H1 (cell line): ENCODE measurements at regions of chr2 and their contacts with region 1.

Region 1: DNA sequence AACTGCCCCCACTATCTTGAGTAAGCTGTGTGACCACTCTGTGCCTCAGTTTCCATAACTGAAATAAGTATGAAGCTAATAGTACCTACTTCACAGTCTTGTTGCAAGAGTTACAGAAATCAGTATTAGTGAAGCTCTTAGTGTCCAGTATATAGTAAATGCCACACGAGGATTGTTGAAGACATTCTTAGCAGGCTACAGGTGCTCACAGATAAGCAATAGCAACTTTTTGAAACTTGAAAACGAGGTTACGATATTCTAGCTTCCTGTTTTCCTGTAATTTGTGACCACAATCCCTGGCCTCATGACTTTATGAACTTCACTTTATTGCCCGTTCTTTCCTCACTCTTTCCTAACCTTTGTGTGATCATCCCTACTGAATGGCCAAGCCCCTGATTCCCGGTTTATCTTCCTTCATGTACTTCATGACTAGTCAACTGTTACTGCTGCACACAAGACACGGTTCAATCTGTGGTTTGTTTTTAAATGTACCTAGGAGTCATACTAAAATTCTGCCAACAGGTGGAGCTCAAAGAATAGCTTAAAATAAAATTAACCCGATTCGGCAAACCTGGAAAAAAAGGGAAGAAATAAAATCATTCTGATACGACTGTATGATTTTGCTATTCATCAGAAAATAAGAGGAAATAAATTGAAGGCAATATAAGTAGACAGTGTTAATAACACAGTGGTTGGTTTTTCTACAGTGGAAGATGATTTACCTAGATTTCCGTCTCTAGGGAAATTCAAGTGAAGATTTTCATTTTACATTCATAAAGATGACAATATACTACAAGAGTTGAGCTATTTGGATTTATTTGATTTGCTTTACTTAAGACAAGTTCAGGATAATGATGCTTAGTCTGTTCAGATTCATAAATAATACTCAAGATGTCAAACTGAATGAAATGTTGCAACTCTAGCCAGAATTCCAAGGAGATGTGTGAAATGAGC is 38.1 kb upstream of the STAT1 start:
- DNase-seq: no peak
- H3K4me3 ChIP-seq: no peak overlapping the region
- H3K27ac ChIP-seq: no peak overlapping the region
- H3K4me1 ChIP-seq: no peaks in the 10 kb centered on the region
- H3K27me3 ChIP-seq: no peaks in the 10 kb centered on the region
- CTCF ChIP-seq: peak in 2 of 3 experiments; percentile 45 to 52; a peak in 2 of 4 replicates
- EP300 ChIP-seq: no peak
- POLR2A ChIP-seq: no peak
- RAD21 ChIP-seq: peak; percentile 71 to 77

Region 2: GRCh38 chr2:190891372-190891771 is 160.7 kb before region 1 on chr2:
- CTCF ChIA-PET with region 1: no interaction called
- POLR2A ChIA-PET with region 1: no interaction called
- DNase-seq: no peak
- H3K4me3 ChIP-seq: no peak overlapping the region
- H3K27ac ChIP-seq: no peak overlapping the region
- H3K4me1 ChIP-seq: peaks cover 0 to 6% (median 2%) of the 10 kb centered on the region in 4 experiments; a peak in 1 of 7 replicates
- H3K27me3 ChIP-seq: no peaks in the 10 kb centered on the region
- CTCF ChIP-seq: no peak
- EP300 ChIP-seq: no peak
- POLR2A ChIP-seq: no peak
- RAD21 ChIP-seq: no peak

Region 3: DNA sequence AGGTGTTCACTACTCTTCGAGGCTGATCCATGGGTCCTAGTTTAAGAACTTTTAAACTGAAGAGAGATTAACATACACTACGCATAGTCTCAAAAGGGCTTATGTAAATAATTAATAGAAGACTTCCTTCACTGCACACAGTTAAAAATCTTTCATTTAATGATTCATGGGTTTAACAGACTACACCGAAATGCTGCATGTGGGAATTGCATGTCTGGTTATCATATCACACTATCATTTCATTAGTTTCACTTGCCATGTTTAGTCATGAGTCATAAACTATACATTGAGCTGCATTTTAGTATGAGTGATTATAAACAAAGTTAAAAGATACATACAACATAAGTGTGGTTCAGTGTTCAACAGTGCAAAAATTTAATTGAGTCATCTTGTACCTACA is 140.3 kb before region 1 on chr2:
- CTCF ChIA-PET with region 1: no interaction called
- POLR2A ChIA-PET with region 1: no interaction called
- DNase-seq: no peak
- H3K4me3 ChIP-seq: no peak overlapping the region
- H3K27ac ChIP-seq: no peak overlapping the region
- H3K4me1 ChIP-seq: no peaks in the 10 kb centered on the region
- H3K27me3 ChIP-seq: no peaks in the 10 kb centered on the region
- CTCF ChIP-seq: no peak
- EP300 ChIP-seq: no peak
- POLR2A ChIP-seq: no peak
- RAD21 ChIP-seq: no peak

Region 4: GRCh38 chr2:191064590-191064989 is 12.5 kb after region 1 on chr2:
- CTCF ChIA-PET with region 1: interaction called, 69 read pairs
- POLR2A ChIA-PET with region 1: no interaction called
- DNase-seq: no peak
- H3K4me3 ChIP-seq: no peak overlapping the region
- H3K27ac ChIP-seq: no peak overlapping the region
- H3K4me1 ChIP-seq: no peaks in the 10 kb centered on the region; a peak in 1 of 7 replicates
- H3K27me3 ChIP-seq: no peaks in the 10 kb centered on the region
- CTCF ChIP-seq: no peak
- EP300 ChIP-seq: no peak
- POLR2A ChIP-seq: no peak
- RAD21 ChIP-seq: no peak

Region 5: DNA sequence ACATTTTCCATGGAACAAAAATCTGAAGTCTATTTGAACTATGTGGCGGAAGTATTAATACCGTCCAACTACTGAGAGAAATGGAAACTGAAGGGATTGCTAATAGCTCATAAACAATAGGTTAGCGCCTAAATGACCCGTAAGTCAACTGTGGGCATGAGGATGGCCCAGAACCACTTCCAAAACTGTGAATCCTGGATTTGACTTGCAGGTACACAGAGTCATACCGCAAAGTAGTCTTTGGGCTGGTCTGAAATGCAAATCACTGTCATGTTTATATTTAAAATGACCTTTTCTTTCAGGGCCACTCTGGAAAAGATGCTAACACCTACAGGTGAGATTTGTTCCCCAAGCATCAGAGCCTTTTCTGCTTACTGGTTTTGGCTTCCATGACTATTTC is 48.1 kb after region 1 on chr2:
- CTCF ChIA-PET with region 1: no interaction called
- POLR2A ChIA-PET with region 1: no interaction called
- DNase-seq: no peak
- H3K4me3 ChIP-seq: no peak overlapping the region
- H3K27ac ChIP-seq: no peak overlapping the region
- H3K4me1 ChIP-seq: no peaks in the 10 kb centered on the region
- H3K27me3 ChIP-seq: no peaks in the 10 kb centered on the region
- CTCF ChIP-seq: no peak
- EP300 ChIP-seq: no peak
- POLR2A ChIP-seq: no peak
- RAD21 ChIP-seq: no peak

Region 6: GRCh38 chr2:191165176-191165643 is 113.1 kb after region 1 on chr2:
- CTCF ChIA-PET with region 1: interaction called, 137 read pairs
- POLR2A ChIA-PET with region 1: no interaction called
- DNase-seq: no peak
- H3K4me3 ChIP-seq: no peak overlapping the region
- H3K27ac ChIP-seq: no peak overlapping the region
- H3K4me1 ChIP-seq: no peaks in the 10 kb centered on the region
- H3K27me3 ChIP-seq: no peaks in the 10 kb centered on the region
- CTCF ChIP-seq: peak in 2 of 3 experiments; percentile 60; a peak in 3 of 4 replicates
- EP300 ChIP-seq: no peak
- POLR2A ChIP-seq: no peak
- RAD21 ChIP-seq: peak; percentile 85 to 87

Region 7: DNA sequence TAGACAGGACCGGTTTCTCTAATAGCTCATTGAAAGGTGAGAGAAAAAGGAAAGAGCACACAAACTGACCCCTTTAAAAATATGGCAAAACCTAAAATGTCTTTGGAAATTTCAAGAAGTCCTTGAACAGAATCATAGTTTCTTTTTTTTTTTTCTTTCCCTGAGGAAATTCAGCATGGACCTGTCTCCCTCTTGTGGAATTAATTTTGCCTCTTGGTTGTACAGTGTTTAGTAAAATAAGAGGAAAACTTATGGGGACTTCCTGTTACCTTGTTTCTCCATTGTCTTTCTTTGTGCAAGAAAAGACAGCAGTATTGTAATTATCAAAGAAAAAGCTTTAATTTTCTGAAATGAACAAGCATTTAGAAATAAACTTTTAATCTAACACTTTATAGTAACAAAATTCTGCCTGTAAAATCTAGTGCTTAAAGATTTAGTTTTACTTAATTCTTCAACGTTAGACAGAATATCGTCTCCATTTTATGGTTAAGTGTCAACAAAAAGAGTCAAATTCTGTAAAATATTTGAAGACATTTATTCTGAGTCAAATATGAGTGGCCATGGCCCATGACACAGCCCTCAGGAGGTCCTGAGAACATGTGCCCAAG is 449.6 kb after region 1 on chr2:
- CTCF ChIA-PET with region 1: interaction called, 13 read pairs
- POLR2A ChIA-PET with region 1: no interaction called
- DNase-seq: no peak
- H3K4me3 ChIP-seq: no peak overlapping the region
- H3K27ac ChIP-seq: no peak overlapping the region
- H3K4me1 ChIP-seq: peaks cover 0 to 5% (median 1%) of the 10 kb centered on the region in 4 experiments; a peak in 4 of 7 replicates
- H3K27me3 ChIP-seq: no peaks in the 10 kb centered on the region
- CTCF ChIP-seq: no peak; a peak in 1 of 4 replicates
- EP300 ChIP-seq: no peak
- POLR2A ChIP-seq: no peak
- RAD21 ChIP-seq: peak in 1 of 2 experiments; percentile 26; a peak in 3 of 4 replicates